Colonic mucosa (tissue), 4 donors: ENCODE measurements at regions of chr11 and their contacts with region 1.

Region 1: GRCh38 chr11:65471410-65471762 is 27.5 kb upstream of the MALAT1 start:
- DNase-seq: peak; percentile 76
- H3K4me3 ChIP-seq: peak overlapping the region; percentile 24
- H3K27ac ChIP-seq: peak overlapping the region; percentile 93
- H3K4me1 ChIP-seq: peaks cover 8% of the 10 kb centered on the region
- H3K27me3 ChIP-seq: no peaks in the 10 kb centered on the region
- CTCF ChIP-seq: peak; percentile 57

Region 2: GRCh38 chr11:65506770-65507505 is 35.6 kb after region 1 on chr11:
- intact Hi-C with region 1: loop called (anchors 5 kb)
- DNase-seq: peak; percentile 77
- H3K4me3 ChIP-seq: peak overlapping the region; percentile 66
- H3K27ac ChIP-seq: peak overlapping the region; percentile 99
- H3K4me1 ChIP-seq: peaks cover 2% of the 10 kb centered on the region
- H3K27me3 ChIP-seq: no peaks in the 10 kb centered on the region
- CTCF ChIP-seq: no peak